Left ventricle myocardium inferior (tissue), 1 donor: ENCODE measurements at regions of chr9 and their contacts with region 1.

Region 1: DNA sequence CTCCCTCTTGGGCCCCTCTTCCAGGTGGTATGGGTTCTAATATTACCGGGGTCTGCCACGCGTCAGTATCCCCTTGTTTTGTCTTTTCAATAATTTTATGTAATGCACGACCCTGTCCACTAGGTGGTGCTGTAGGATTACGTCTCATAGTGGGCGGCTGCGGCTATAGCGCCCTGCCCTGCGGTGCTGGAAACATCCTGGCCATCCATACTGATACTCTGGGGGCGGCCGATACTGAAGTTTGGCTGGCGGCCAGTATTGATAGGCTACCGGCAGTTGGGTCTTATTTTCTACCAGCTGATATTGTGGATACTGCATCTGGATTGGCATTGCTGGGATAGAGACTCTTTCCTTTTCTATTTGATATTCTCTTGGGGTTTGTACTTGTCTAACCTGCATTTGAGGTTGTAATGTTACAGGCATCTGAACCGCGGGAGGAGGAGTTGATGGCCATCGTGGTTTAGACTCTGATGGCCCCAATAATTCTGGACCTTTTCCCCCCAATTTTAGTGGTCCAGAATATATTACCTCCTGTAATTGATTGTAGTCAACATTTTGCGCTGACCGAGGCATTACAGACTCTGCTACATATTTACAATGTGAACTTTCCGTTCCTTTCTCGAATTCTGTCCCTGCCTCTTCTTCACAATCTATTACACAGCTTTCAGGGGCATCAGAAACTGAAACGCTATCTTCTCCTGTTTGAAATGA is 3.3 kb upstream of the TMEM141 start:
- DNase-seq: peak; percentile 56
- H3K4me3 ChIP-seq: peak overlapping the region; percentile 2
- H3K27ac ChIP-seq: peak overlapping the region; percentile 34
- H3K4me1 ChIP-seq: peaks cover 32% of the 10 kb centered on the region
- H3K27me3 ChIP-seq: no peaks in the 10 kb centered on the region
- CTCF ChIP-seq: peak; percentile 90

Region 2: DNA sequence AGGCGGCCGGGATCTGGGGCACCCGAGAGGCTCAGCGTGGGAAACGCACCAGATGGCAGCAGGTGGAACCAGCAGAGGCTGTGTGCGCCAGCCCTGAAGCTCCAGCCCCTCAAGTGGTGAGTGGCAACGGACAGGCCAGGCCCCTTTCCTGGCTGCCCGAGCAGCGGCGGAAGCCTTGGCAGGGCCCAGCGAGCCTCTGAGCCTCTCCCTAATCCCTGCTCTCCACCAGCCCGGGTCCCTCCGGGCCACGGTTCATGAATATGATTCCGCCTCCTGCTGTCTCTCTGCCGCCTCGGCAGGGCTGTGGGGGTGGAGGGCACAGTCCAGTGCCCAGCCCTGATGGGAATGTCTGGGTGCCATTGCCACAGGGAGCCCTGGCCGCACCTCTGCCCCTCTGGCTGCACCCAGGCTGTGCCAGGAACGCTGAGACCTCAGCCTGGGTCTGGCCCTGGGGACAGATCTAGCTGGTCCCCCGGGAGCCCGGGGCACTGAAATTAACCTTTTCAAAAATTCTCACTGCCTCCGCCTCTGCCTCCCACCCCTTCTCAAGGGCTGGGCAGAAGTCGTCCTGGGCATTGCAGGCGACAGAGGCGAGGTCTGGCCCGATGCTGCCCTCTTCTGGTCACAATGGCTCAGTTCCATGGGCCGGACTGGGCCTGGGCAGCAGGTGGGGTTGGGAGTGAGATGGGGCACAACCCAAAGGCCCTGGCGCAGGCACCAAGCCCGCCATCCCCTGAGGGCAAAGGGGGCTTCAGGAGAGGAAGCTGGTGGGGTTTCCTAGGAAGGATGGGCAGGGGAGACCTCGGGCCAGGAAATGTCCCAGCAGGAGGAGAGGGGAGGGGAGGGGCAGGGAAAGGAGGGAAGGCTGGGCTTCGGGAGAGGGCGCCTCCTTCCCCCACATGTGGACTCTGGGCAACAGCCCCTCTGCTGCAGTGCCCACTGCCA is 504.3 kb before region 1 on chr9:
- intact Hi-C with region 1: no loop called
- DNase-seq: peak; percentile 79
- H3K4me3 ChIP-seq: peak overlapping the region; percentile 50
- H3K27ac ChIP-seq: peak overlapping the region; percentile 54
- H3K4me1 ChIP-seq: peaks cover 8% of the 10 kb centered on the region
- H3K27me3 ChIP-seq: peaks cover 89% of the 10 kb centered on the region
- CTCF ChIP-seq: peak; percentile 87

Region 3: GRCh38 chr9:136410500-136411287 is 377.2 kb before region 1 on chr9 and contains the starts of genes ENTR1 and PMPCA:
- intact Hi-C with region 1: no loop called
- DNase-seq: peak; percentile 93
- H3K4me3 ChIP-seq: peak within 1 kb of the TSS; percentile 97
- H3K27ac ChIP-seq: peak within 1 kb of the TSS; percentile 88
- H3K4me1 ChIP-seq: peaks cover 39% of the 10 kb centered on the region
- H3K27me3 ChIP-seq: no peaks in the 10 kb centered on the region
- CTCF ChIP-seq: no peak
- total RNA-seq, gene ENTR1: 20.1 TPM
- total RNA-seq, gene PMPCA: 80.9 TPM

Region 4: DNA sequence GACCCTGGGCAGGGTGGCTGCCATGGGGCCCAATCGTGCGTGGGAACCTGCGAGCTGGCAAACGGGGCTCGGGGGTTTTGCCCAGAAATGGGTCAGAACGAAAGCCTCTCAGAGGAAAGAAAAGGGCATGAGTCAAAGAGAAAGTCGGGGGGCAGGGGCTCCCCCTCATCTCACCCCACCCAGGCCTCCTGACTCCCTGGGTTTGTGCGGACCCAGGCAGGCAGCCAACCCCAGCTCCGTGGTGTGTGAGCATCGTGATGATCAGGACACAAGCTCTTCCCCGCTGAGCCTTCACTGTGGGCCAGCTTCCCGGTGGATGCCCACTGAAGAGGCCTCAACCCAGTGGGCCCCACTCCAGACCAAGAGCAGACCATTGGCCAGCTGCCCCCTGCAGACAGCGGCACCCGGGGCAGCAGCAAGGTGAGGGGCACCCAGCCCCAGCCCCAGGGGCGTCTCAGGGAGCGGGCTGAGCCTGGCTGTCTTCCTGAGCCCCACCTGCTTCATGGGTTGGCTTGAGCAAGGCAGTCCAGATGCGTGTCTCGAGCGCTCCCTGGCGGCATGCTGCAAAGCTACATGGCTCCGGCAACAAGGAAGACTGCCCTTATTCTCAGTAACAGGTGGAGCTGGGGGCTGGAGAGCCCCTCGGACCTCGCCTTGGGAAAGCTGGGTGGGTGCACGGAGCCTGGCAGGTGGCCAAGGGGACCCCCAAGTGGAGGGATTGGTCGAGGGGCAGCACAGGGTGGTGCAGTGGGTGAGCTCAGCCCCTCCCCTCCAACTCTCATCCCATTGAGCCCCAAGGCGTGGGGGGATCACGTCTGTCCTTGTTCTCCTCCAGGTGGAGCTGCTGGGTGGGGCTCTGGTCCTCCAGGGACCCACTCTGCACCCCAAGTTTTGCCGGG is 247.3 kb after region 1 on chr9:
- intact Hi-C with region 1: loop called (anchors 5 kb)
- DNase-seq: peak; percentile 77
- H3K4me3 ChIP-seq: peak overlapping the region; percentile 25
- H3K27ac ChIP-seq: peak overlapping the region; percentile 36
- H3K4me1 ChIP-seq: peaks cover 16% of the 10 kb centered on the region
- H3K27me3 ChIP-seq: no peaks in the 10 kb centered on the region
- CTCF ChIP-seq: peak; percentile 93

Region 5: GRCh38 chr9:137892424-137893191 is 1104.8 kb after region 1 on chr9:
- intact Hi-C with region 1: no loop called
- DNase-seq: no peak
- H3K4me3 ChIP-seq: no peak overlapping the region
- H3K27ac ChIP-seq: no peak overlapping the region
- H3K4me1 ChIP-seq: no peaks in the 10 kb centered on the region
- H3K27me3 ChIP-seq: peaks cover 13% of the 10 kb centered on the region
- CTCF ChIP-seq: no peak